PC-9 (cell line): ENCODE measurements at regions of chrX and their contacts with region 1.

Region 1: GRCh38 chrX:116806288-116806802 is 343.6 kb upstream of the CT83 start:
- DNase-seq: no peak
- H3K4me3 ChIP-seq: no peak overlapping the region
- H3K27ac ChIP-seq: no peak overlapping the region
- H3K4me1 ChIP-seq: no peaks in the 10 kb centered on the region
- H3K27me3 ChIP-seq: no peaks in the 10 kb centered on the region
- CTCF ChIP-seq: no peak

Region 2: DNA sequence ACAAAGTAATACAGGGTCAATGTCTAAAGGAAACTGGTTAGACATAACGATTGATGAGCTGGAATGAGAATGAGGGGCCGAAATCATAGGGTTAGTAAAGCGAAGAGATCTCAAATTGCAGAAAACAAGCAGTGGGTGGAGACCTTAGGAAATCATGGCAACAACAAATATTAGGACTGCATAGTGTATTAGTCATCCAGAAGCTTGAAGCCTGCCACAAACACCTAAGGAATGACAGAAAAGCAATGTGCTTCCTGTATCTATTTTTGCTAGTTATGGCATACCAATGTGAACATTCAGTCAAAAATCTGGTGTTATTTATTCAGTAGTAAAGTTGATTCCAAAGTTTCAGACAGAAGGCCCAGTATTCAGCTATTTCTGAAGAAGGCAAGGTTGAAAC is 67.3 kb after region 1 on chrX:
- CTCF ChIA-PET with region 1: no interaction called
- POLR2A ChIA-PET with region 1: no interaction called
- intact Hi-C with region 1: loop called (anchors 2 kb)
- DNase-seq: peak; percentile 37 to 88
- H3K4me3 ChIP-seq: no peak overlapping the region
- H3K27ac ChIP-seq: peak overlapping the region; percentile 75
- H3K4me1 ChIP-seq: peaks cover 21% of the 10 kb centered on the region
- H3K27me3 ChIP-seq: no peaks in the 10 kb centered on the region
- CTCF ChIP-seq: no peak